T-cell (primary cell): ENCODE measurements at regions of chr9 and their contacts with region 1.

Region 1: DNA sequence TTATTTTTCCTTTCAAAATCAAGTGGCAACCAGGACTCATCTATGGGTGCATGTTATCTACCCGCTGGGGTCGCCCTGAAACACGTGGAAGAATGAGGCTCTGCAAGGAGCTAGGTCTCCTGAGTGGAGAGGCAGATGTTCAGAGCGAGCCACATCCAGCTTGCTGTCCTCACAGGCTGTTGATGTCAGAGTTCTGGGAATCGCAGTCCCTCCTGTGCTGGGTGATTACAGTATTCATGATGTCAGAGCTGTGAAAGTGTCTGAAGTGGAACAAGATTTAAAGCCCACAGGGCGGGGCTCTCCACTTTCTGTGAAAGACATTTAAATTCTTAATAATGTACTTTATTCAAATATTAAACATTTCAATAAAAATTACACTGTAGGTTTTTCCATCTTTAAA is 24.4 kb upstream of the LMX1B start:
- DNase-seq: no peak
- ATAC-seq: no peak
- H3K4me3 ChIP-seq: no peak overlapping the region
- H3K4me3 Mint-ChIP-seq: no peak overlapping the region
- H3K27ac ChIP-seq: no peak overlapping the region
- H3K27ac Mint-ChIP-seq: no peak overlapping the region
- H3K4me1 ChIP-seq: no peaks in the 10 kb centered on the region
- H3K4me1 Mint-ChIP-seq: no peaks in the 10 kb centered on the region
- H3K27me3 ChIP-seq: peaks cover 10 to 60% of the 10 kb centered on the region in 2 experiments
- H3K27me3 Mint-ChIP-seq: peaks cover 49 to 74% of the 10 kb centered on the region in 2 donors

Region 2: GRCh38 chr9:125782718-125783117 is 806.6 kb before region 1 on chr9:
- CTCF ChIA-PET with region 1: no interaction called
- POLR2A ChIA-PET with region 1: interaction called in 1 of 2 experiments, 12 read pairs
- DNase-seq: no peak
- ATAC-seq: no peak
- H3K4me3 ChIP-seq: no peak overlapping the region
- H3K4me3 Mint-ChIP-seq: no peak overlapping the region
- H3K27ac ChIP-seq: no peak overlapping the region
- H3K27ac Mint-ChIP-seq: no peak overlapping the region
- H3K4me1 ChIP-seq: peaks cover 0 to 6% of the 10 kb centered on the region in 2 experiments
- H3K4me1 Mint-ChIP-seq: peaks cover 24 to 28% (median 25%) of the 10 kb centered on the region in 3 donors
- H3K27me3 ChIP-seq: no peaks in the 10 kb centered on the region
- H3K27me3 Mint-ChIP-seq: no peaks in the 10 kb centered on the region

Region 3: GRCh38 chr9:126270556-126270955 is 318.8 kb before region 1 on chr9:
- CTCF ChIA-PET with region 1: no interaction called
- POLR2A ChIA-PET with region 1: no interaction called
- DNase-seq: no peak
- ATAC-seq: no peak
- H3K4me3 ChIP-seq: no peak overlapping the region
- H3K4me3 Mint-ChIP-seq: no peak overlapping the region
- H3K27ac ChIP-seq: no peak overlapping the region
- H3K27ac Mint-ChIP-seq: no peak overlapping the region
- H3K4me1 ChIP-seq: no peaks in the 10 kb centered on the region
- H3K4me1 Mint-ChIP-seq: no peaks in the 10 kb centered on the region
- H3K27me3 ChIP-seq: peaks cover 2 to 24% of the 10 kb centered on the region in 2 experiments
- H3K27me3 Mint-ChIP-seq: peaks cover 13 to 29% of the 10 kb centered on the region in 2 donors